Mammary epithelial cell (primary cell): ENCODE measurements at regions of chr5 and their contacts with region 1.

Region 1: DNA sequence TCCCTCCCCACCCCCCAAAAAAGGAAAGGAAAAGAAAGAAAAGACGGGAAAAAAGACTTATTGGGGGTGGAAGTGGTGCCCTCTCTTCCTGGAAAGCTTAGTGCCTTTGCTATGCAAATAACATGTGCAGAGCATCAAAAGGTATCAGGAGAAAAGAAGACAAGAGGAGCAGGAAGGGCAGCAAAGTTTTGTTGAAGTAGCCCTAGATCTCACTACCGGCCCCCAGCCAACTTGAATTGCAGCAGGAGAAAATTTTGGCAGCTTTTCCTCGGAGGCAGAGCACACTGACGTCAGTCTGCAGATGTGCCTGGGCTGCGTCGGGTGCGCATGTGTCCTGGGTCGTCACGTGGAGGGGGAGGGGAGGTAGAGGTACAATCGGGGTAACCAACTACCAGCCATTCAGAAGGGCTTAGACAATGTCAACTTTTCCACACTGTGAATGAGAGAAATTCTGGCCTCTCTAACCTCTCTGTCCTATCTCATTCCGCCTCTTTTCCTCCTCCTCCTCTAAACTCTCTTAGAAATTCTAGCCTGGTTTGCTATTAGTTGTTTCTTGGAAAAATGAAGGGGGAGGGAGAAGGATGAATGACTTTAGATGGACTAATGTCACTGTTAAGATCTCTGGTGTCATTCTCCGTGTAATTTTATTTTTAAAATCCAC is at the start of gene ADAMTS6:
- DNase-seq: peak; percentile 87
- H3K4me3 ChIP-seq: peak within 1 kb of the TSS; percentile 54 to 88 (median 80)
- H3K27ac ChIP-seq: peak within 1 kb of the TSS; percentile 76
- H3K4me1 ChIP-seq: peaks cover 9% of the 10 kb centered on the region
- H3K27me3 ChIP-seq: no peaks in the 10 kb centered on the region
- CTCF ChIP-seq: no peak
- total RNA-seq, gene ADAMTS6: 47.5 to 63.7 TPM

Region 2: GRCh38 chr5:64147849-64148441 is 1333.8 kb before region 1 on chr5:
- CTCF ChIA-PET with region 1: no interaction called
- dilution Hi-C with region 1: no loop called
- in situ Hi-C with region 1: no loop called
- intact Hi-C with region 1: loop called (anchors 10 kb)
- DNase-seq: peak; percentile 28
- H3K4me3 ChIP-seq: no peak overlapping the region
- H3K27ac ChIP-seq: no peak overlapping the region
- H3K4me1 ChIP-seq: peaks cover 10% of the 10 kb centered on the region
- H3K27me3 ChIP-seq: no peaks in the 10 kb centered on the region
- CTCF ChIP-seq: peak; percentile 77 to 84

Region 3: DNA sequence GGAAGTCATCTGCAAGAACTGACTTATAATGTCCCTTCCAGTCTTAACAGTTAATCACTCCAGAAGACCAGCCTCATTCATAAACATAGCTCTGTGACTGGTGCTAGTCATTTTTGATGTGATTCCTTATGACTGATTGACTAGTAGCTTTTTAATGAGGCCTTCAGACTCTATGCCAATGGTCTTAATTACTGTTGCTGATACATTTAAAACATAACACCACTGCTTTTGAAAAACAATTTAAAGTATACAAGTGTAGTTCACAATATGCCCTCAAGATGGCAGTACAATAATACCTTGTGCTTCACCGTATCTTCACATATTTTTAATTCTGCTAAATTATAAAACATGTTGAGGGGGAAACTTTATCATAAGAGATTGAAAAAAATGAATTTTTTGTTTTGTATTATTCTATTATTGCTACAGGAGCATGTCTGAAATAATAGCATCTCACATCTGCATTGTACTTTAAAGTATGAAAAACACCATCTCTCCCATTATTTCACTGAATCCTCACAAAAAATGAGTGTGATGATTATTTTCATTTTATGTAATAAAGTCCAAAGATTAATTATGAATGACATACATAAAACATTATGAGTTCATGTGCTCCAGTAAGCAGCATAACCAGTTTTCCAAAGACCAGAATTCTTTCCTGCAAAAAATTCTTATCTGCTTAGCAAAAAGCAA is 846.6 kb before region 1 on chr5:
- CTCF ChIA-PET with region 1: interaction called, 3 read pairs
- dilution Hi-C with region 1: no loop called
- in situ Hi-C with region 1: loop called (anchors 25 kb)
- intact Hi-C with region 1: loop called (anchors 1 kb)
- DNase-seq: peak; percentile 14
- H3K4me3 ChIP-seq: no peak overlapping the region
- H3K27ac ChIP-seq: no peak overlapping the region
- H3K4me1 ChIP-seq: no peaks in the 10 kb centered on the region
- H3K27me3 ChIP-seq: no peaks in the 10 kb centered on the region
- CTCF ChIP-seq: peak; percentile 66 to 69

Region 4: GRCh38 chr5:64939522-64940510 is 541.9 kb before region 1 on chr5:
- CTCF ChIA-PET with region 1: no interaction called
- dilution Hi-C with region 1: no loop called
- in situ Hi-C with region 1: loop called in 1 of 2 experiments (anchors 25 kb)
- intact Hi-C with region 1: no loop called
- DNase-seq: no peak
- H3K4me3 ChIP-seq: no peak overlapping the region
- H3K27ac ChIP-seq: no peak overlapping the region
- H3K4me1 ChIP-seq: no peaks in the 10 kb centered on the region
- H3K27me3 ChIP-seq: no peaks in the 10 kb centered on the region
- CTCF ChIP-seq: no peak

Region 5: GRCh38 chr5:64971513-64971912 is 510.3 kb before region 1 on chr5:
- CTCF ChIA-PET with region 1: interaction called, 5 read pairs
- dilution Hi-C with region 1: no loop called
- in situ Hi-C with region 1: loop called in 1 of 2 experiments (anchors 25 kb)
- intact Hi-C with region 1: loop called (anchors 5 kb)
- DNase-seq: no peak
- H3K4me3 ChIP-seq: no peak overlapping the region
- H3K27ac ChIP-seq: no peak overlapping the region
- H3K4me1 ChIP-seq: no peaks in the 10 kb centered on the region
- H3K27me3 ChIP-seq: no peaks in the 10 kb centered on the region
- CTCF ChIP-seq: no peak

Region 6: GRCh38 chr5:65151614-65152013 is 330.2 kb before region 1 on chr5:
- CTCF ChIA-PET with region 1: no interaction called
- dilution Hi-C with region 1: loop called (anchors 5 kb)
- in situ Hi-C with region 1: no loop called
- intact Hi-C with region 1: no loop called
- DNase-seq: no peak
- H3K4me3 ChIP-seq: no peak overlapping the region
- H3K27ac ChIP-seq: no peak overlapping the region
- H3K4me1 ChIP-seq: no peaks in the 10 kb centered on the region
- H3K27me3 ChIP-seq: no peaks in the 10 kb centered on the region
- CTCF ChIP-seq: no peak

Region 7: DNA sequence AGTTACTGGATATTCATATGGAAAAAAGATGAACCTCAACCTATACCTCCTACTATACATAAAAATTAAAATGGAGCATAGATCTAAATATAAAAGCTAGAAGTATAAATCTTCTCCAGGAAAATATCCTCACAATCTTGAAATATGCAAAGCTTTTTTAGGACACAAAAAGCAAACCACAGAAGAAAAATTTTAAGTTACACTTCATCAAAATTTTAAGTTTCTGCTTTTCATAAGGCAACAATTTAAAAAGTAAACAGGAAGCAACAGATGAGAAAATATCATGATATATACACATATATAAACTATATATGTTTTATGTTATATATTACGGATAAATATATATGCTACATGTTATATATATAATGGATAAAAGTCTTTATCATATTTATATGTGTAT is 157.5 kb before region 1 on chr5:
- CTCF ChIA-PET with region 1: no interaction called
- dilution Hi-C with region 1: no loop called
- in situ Hi-C with region 1: no loop called
- intact Hi-C with region 1: no loop called
- DNase-seq: no peak
- H3K4me3 ChIP-seq: no peak overlapping the region
- H3K27ac ChIP-seq: no peak overlapping the region
- H3K4me1 ChIP-seq: no peaks in the 10 kb centered on the region
- H3K27me3 ChIP-seq: no peaks in the 10 kb centered on the region
- CTCF ChIP-seq: no peak